ENCODE measurements at regions of chr19 and their contacts with region 1.

Region 1: GRCh38 chr19:35882114-35882832 is 13.9 kb downstream of the APLP1 start:
- DNase-seq: peak; percentile 77 to 92 (median 88)
- H3K4me3 ChIP-seq: no peak overlapping the region
- H3K27ac ChIP-seq: no peak overlapping the region
- H3K4me1 ChIP-seq: peaks cover 0 to 3% (median 1%) of the 10 kb centered on the region in 4 experiments
- H3K27me3 ChIP-seq: peaks cover 0 to 22% (median 8%) of the 10 kb centered on the region in 5 experiments

Region 2: DNA sequence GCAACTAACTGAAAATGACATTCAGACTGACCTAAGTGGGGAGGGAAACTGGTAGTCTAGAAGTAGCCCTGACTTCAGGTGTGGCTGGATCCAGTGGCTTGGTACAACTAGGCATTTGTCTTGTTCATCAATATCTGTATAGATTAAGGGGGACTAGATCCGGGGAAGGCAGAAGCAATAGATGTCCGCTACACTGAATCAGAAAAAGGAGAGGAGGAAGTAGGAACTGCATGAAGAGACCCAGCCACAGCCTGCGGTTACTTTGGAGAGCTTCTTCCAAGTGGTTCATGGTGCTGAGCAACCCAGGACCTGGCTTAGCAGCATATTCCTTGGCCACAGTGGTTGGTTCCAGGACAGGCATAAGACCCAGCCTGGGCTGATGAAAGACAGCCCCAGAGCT is 59.7 kb before region 1 on chr19:
- CTCF ChIA-PET with region 1: no interaction called
- POLR2A ChIA-PET with region 1: no interaction called
- DNase-seq: peak in 2 of 3 donors; percentile 46 to 55
- H3K4me3 ChIP-seq: no peak overlapping the region
- H3K27ac ChIP-seq: no peak overlapping the region
- H3K4me1 ChIP-seq: peaks cover 0 to 7% (median 0%) of the 10 kb centered on the region in 4 experiments
- H3K27me3 ChIP-seq: peaks cover 0 to 17% (median 2%) of the 10 kb centered on the region in 5 experiments

Region 3: GRCh38 chr19:35899547-35900214 is 17.4 kb after region 1 on chr19:
- CTCF ChIA-PET with region 1: interaction called, 20 read pairs
- POLR2A ChIA-PET with region 1: interaction called, 4 read pairs
- DNase-seq: peak; percentile 80 to 92 (median 91)
- H3K4me3 ChIP-seq: peak overlapping the region; percentile 72 to 90 (median 84)
- H3K27ac ChIP-seq: peak overlapping the region; percentile 91 to 94
- H3K4me1 ChIP-seq: peaks cover 12 to 59% (median 55%) of the 10 kb centered on the region in 4 experiments
- H3K27me3 ChIP-seq: no peaks in the 10 kb centered on the region